ENCODE measurements at regions of chr12 and their contacts with region 1.

Region 1: GRCh38 chr12:6851921-6852650 is at the start of gene USP5:
- DNase-seq: peak; percentile 94

Region 2: DNA sequence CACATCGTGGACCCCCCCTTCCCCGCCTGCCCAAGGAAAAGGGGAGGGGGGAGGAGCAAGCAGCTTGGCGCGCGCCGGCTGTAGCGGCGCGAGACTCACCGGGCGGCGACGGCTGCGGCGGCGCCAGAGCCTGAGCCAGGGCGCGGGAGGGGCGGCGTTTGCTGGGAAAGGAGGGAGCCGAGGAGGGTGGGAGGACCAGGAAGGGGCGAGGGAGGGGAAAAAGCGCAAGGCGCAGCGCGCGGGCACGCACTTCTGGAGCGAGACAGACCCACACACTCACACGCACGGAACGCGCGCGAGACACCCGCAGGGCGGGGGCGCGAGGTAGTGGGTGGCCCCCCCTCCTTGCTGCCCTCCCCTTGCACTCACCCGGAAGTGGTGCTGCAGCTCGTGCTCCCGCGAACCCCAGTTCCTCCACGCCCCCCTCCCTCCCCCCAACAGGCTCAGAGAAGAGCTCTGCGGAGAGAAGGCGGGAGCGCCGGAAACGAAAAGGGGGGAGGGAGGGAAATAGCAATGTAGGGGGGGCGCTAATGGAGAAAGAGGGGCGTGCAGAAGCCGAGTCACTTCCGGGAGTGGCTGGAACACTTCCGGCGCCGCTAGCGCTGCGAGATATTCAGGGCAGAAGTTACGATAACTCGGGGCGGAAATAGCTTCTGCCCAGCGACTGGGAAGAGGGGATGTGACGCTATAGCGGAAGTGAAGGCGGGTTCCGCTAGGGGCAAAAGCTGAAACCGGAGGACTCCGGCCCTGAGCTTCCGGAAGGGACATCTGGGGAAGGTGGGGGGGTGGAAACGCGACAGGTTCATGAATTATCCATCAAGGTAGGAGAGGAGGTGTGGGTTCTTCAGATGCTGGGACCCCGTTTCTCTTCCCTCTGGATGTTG is 162.8 kb before region 1 on chr12 and contains the start of gene ZNF384:
- CTCF ChIA-PET with region 1: no interaction called
- POLR2A ChIA-PET with region 1: interaction called, 14 read pairs
- DNase-seq: peak; percentile 95

Region 3: GRCh38 chr12:6764011-6764828 is 87.9 kb before region 1 on chr12:
- CTCF ChIA-PET with region 1: no interaction called
- POLR2A ChIA-PET with region 1: interaction called, 17 read pairs
- DNase-seq: peak; percentile 94

Region 4: DNA sequence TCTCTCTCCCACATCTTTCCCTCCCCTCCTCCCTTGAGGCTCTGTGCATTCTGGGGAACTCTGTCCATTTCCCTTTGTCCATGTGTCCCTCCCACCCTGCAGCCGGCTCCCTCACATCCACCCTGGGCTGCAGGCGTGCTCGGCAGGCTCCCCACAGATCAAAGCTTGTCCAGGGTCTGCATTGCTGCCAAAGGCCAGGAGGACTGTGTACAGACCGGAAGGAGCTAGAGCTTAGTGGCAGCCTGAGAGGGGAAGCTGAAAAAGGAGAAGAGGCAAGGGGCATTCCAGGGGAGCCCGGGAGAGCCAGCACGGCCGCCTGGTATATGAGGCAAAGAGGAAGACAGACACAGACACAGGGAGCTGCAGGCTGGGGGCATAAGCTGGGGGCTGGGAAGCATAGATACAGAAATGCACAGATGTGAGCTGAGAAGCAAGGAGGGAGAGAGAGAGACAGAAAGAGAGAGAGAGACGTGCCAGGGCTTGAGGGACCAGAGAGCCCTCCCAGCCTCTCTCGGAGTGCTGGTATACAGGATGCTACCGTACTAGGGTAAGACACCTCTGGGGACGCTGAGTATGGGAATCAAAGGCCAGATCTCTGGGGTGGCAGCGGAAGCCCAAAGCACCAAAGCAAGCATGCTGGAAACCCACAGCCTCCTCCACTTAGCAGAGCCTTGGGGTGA is 59.4 kb before region 1 on chr12:
- CTCF ChIA-PET with region 1: no interaction called
- POLR2A ChIA-PET with region 1: no interaction called
- DNase-seq: no peak

Region 5: GRCh38 chr12:6807170-6807569 is 44.9 kb before region 1 on chr12:
- CTCF ChIA-PET with region 1: no interaction called
- POLR2A ChIA-PET with region 1: no interaction called
- DNase-seq: no peak

Region 6: GRCh38 chr12:6833189-6833890 is 18.7 kb before region 1 on chr12:
- CTCF ChIA-PET with region 1: interaction called, 14 read pairs
- POLR2A ChIA-PET with region 1: interaction called, 57 read pairs
- DNase-seq: no peak

Region 7: GRCh38 chr12:6867413-6868210 is 15.5 kb after region 1 on chr12 and contains the start of gene TPI1:
- CTCF ChIA-PET with region 1: interaction called, 28 read pairs
- POLR2A ChIA-PET with region 1: interaction called, 214 read pairs
- DNase-seq: peak; percentile 91

Region 8: GRCh38 chr12:6890789-6891645 is 38.9 kb after region 1 on chr12:
- CTCF ChIA-PET with region 1: interaction called, 6 read pairs
- POLR2A ChIA-PET with region 1: interaction called, 12 read pairs
- DNase-seq: peak; percentile 97